ENCODE measurements at regions of chr13 and their contacts with region 1.

Region 1: GRCh38 chr13:98576963-98577822 is at the start of gene STK24:
- DNase-seq: peak in 9 of 10 donors; percentile 16 to 66 (median 51)
- ATAC-seq: peak; percentile 44 to 63
- H3K4me3 Mint-ChIP-seq: peak within 1 kb of the TSS; percentile 80 to 96 (median 90)
- H3K27ac Mint-ChIP-seq: peak within 1 kb of the TSS; percentile 90 to 96 (median 95)
- H3K4me1 Mint-ChIP-seq: peaks cover 15 to 55% (median 40%) of the 10 kb centered on the region in 4 donors
- H3K27me3 Mint-ChIP-seq: no peaks in the 10 kb centered on the region
- polyA plus RNA-seq, gene STK24: 22.7 to 66.6 (median 37.3) TPM

Region 2: GRCh38 chr13:98476538-98476966 is 100.6 kb before region 1 on chr13:
- POLR2A ChIA-PET with region 1: interaction called, 10 read pairs
- DNase-seq: peak; percentile 42 to 88 (median 73)
- ATAC-seq: peak; percentile 95 to 99
- H3K4me3 Mint-ChIP-seq: peak overlapping the region; percentile 48 to 78 (median 70)
- H3K27ac Mint-ChIP-seq: peak overlapping the region; percentile 88 to 94 (median 92)
- H3K4me1 Mint-ChIP-seq: peaks cover 35 to 70% (median 64%) of the 10 kb centered on the region in 4 donors
- H3K27me3 Mint-ChIP-seq: no peaks in the 10 kb centered on the region

Region 3: GRCh38 chr13:98565726-98566565 is 11.2 kb before region 1 on chr13:
- POLR2A ChIA-PET with region 1: interaction called, 35 read pairs
- DNase-seq: no peak
- ATAC-seq: no peak
- H3K4me3 Mint-ChIP-seq: peak overlapping the region; percentile 11 to 89 (median 80)
- H3K27ac Mint-ChIP-seq: peak overlapping the region; percentile 85 to 98 (median 92)
- H3K4me1 Mint-ChIP-seq: peaks cover 51 to 97% (median 94%) of the 10 kb centered on the region in 4 donors
- H3K27me3 Mint-ChIP-seq: no peaks in the 10 kb centered on the region

Region 4: GRCh38 chr13:98598043-98598442 is 20.9 kb after region 1 on chr13:
- POLR2A ChIA-PET with region 1: no interaction called
- DNase-seq: no peak
- ATAC-seq: no peak
- H3K4me3 Mint-ChIP-seq: no peak overlapping the region
- H3K27ac Mint-ChIP-seq: no peak overlapping the region
- H3K4me1 Mint-ChIP-seq: peaks cover 0 to 2% (median under 1%) of the 10 kb centered on the region in 4 donors
- H3K27me3 Mint-ChIP-seq: peaks cover 0 to 4% (median 0%) of the 10 kb centered on the region in 5 donors

Measured in naive thymus-derived CD8-positive, alpha-beta T cell (primary cell).